ENCODE measurements at regions of chr7 and their contacts with region 1.

Region 1: GRCh38 chr7:1159891-1160668 is at the start of gene ZFAND2A:
- DNase-seq: peak; percentile 98 to 99 (median 98)
- H3K4me3 ChIP-seq: peak within 1 kb of the TSS; percentile 99
- H3K27ac ChIP-seq: peak within 1 kb of the TSS; percentile 92 to 99
- H3K4me1 ChIP-seq: peaks cover 10% of the 10 kb centered on the region
- H3K27me3 ChIP-seq: no peaks in the 10 kb centered on the region
- CTCF ChIP-seq: no peak
- EP300 ChIP-seq: no peak
- POLR2A ChIP-seq: peak; percentile 61
- total RNA-seq, gene ZFAND2A: 8.1 to 24.9 (median 16.9) TPM

Region 2: GRCh38 chr7:876167-876967 is 283.7 kb before region 1 on chr7 and contains the start of gene GET4:
- intact Hi-C with region 1: no loop called
- DNase-seq: peak; percentile 96 to 99 (median 98)
- H3K4me3 ChIP-seq: peak within 1 kb of the TSS; percentile 95
- H3K27ac ChIP-seq: peak within 1 kb of the TSS; percentile 82 to 85
- H3K4me1 ChIP-seq: peaks cover 22% of the 10 kb centered on the region
- H3K27me3 ChIP-seq: no peaks in the 10 kb centered on the region
- CTCF ChIP-seq: peak in 2 of 3 donors; percentile 46 to 50
- EP300 ChIP-seq: no peak
- POLR2A ChIP-seq: peak; percentile 85
- total RNA-seq, gene GET4: 16.8 to 37.6 (median 30.4) TPM

Region 3: DNA sequence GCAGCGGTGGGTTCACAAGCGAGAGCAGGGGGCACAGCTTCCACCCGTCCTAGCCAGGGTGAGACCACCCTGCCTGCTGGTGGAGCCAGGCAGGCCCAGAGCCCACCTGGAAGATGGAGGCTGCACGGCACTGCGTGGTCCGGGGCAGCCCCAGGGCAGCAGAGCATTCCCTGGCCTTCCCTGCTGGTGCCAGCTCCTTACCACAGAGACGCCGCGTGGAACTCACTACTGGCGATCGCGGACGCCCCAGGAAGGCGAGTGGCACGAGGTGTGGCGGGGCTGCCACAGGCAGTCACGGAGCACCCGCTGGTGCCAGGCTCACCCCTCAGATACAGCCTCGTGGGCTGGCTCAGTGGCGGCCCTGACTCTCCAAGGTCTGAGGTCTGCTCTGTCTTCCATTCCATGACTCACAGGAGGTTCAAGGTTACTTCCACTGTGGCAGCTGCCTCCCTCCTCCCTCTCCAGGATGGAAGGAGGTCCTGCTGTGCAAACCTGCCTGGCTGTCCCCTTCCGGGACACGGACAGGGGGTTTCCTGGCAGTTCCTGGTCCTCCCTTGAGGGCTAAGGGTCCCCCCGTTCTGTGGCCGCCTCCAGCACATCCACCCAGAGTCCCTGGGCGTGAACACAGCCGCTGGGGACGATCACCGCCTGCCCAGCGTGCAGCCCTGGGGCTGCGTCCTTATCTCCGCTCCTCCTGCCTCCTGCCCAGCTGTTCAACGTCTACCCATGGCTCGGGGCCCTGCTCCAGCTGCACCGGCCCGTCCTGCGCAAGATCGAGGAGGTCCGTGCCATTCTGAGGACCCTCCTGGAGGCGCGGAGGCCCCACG is 174.0 kb before region 1 on chr7:
- intact Hi-C with region 1: loop called in 1 of 4 experiments (anchors 10 kb)
- DNase-seq: peak; percentile 67 to 82 (median 74)
- H3K4me3 ChIP-seq: no peak overlapping the region
- H3K27ac ChIP-seq: peak overlapping the region in 1 of 2 donors; percentile 59
- H3K4me1 ChIP-seq: peaks cover 30% of the 10 kb centered on the region
- H3K27me3 ChIP-seq: no peaks in the 10 kb centered on the region
- CTCF ChIP-seq: no peak
- EP300 ChIP-seq: no peak
- POLR2A ChIP-seq: peak; percentile 8

Region 4: GRCh38 chr7:1004018-1004852 is 155.8 kb before region 1 on chr7:
- intact Hi-C with region 1: no loop called
- DNase-seq: no peak
- H3K4me3 ChIP-seq: no peak overlapping the region
- H3K27ac ChIP-seq: no peak overlapping the region
- H3K4me1 ChIP-seq: no peaks in the 10 kb centered on the region
- H3K27me3 ChIP-seq: no peaks in the 10 kb centered on the region
- CTCF ChIP-seq: no peak
- EP300 ChIP-seq: no peak
- POLR2A ChIP-seq: no peak

Region 5: GRCh38 chr7:1312136-1313070 is 152.3 kb after region 1 on chr7:
- intact Hi-C with region 1: no loop called
- DNase-seq: no peak
- H3K4me3 ChIP-seq: no peak overlapping the region
- H3K27ac ChIP-seq: no peak overlapping the region
- H3K4me1 ChIP-seq: no peaks in the 10 kb centered on the region
- H3K27me3 ChIP-seq: no peaks in the 10 kb centered on the region
- CTCF ChIP-seq: no peak
- EP300 ChIP-seq: no peak
- POLR2A ChIP-seq: no peak

Region 6: DNA sequence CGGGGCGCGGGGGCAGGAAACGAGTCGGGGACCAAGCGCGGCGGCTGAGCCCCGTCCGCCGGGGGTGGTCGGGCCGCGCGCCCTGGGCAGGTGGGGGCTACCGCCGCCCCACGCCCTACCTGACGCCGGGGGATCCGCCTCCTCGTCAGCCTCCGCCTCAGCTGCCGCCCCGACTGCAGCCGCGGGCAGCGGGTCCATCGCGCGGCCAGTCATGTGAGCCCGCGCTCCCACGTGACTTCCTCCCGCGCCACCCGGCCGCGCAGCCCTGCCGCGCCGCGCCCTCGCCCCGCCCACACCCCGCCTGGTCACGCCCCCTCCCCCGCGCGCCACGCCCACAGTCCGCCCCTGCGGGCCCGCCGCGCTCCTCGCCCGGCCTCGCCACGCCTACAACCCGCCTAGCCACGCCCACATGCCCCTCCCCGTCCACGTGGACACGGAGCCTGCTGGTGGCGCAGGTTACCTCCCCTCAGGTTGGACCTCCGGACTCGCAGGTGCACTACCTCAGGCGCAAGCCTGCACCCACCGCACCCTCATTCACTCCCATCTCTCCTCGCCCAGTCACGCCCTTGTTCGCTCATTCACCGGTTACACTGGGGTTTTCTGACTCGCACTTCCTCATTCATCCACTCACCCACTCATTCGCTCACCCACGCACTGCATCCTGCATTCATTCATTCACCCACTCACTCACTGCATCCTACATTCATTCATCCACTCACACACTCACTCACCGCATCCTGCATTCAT is 1154.3 kb after region 1 on chr7 and contains the start of gene SNX8:
- intact Hi-C with region 1: no loop called
- DNase-seq: peak; percentile 88 to 96 (median 95)
- H3K4me3 ChIP-seq: peak within 1 kb of the TSS; percentile 98
- H3K27ac ChIP-seq: peak within 1 kb of the TSS in 1 of 2 donors; percentile 49
- H3K4me1 ChIP-seq: peaks cover 5% of the 10 kb centered on the region
- H3K27me3 ChIP-seq: no peaks in the 10 kb centered on the region
- CTCF ChIP-seq: no peak
- EP300 ChIP-seq: no peak
- POLR2A ChIP-seq: no peak
- total RNA-seq, gene SNX8: 3.2 to 37.2 (median 19.7) TPM